ENCODE measurements at regions of chr1 and their contacts with region 1.

Region 1: GRCh38 chr1:17045634-17046333 is 8.0 kb downstream of the SDHB start:
- DNase-seq: no peak
- H3K4me3 ChIP-seq: no peak overlapping the region
- H3K27ac ChIP-seq: peak overlapping the region; percentile 3; the same call in 1 of the 2 replicates
- H3K4me1 ChIP-seq: no peaks in the 10 kb centered on the region
- H3K27me3 ChIP-seq: no peaks in the 10 kb centered on the region
- CTCF ChIP-seq: peak in 2 of 3 experiments; percentile 62 to 64; a peak in 3 of 4 replicates
- EP300 ChIP-seq: no peak
- POLR2A ChIP-seq: no peak
- RAD21 ChIP-seq: peak; percentile 78 to 81

Region 2: DNA sequence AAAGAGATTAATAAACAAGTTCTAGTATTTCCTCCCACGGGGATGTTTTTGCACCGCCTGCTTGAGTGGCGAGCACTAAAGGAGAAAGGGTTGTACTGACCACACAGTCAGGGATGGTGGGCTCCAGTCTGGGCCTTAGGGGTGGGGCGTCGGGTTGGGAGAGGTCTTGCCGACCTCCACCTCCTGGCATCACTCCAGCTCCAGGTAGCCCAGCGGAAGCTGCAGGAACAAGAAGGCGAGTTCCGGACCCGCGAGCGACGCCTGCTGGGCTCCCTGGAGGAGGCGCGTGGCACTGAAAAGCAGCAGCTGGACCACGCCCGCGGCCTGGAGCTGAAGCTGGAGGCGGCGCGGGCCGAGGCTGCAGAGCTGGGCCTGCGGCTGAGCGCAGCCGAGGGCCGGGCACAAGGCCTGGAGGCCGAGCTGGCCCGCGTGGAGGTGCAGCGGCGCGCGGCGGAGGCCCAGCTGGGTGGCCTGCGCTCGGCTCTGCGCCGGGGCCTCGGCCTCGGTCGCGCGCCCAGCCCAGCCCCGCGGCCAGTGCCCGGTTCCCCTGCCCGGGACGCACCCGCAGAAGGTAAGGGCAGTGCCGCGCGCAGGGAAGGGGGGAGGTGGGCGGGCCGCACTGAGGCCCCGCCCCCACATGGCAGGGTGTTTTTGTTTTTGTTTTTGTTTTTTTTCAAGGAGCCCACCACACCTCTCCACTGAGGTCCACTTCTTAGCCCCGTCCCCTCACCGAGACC is 85.1 kb before region 1 on chr1:
- CTCF ChIA-PET with region 1: interaction called, 95 read pairs
- POLR2A ChIA-PET with region 1: no interaction called
- DNase-seq: peak; percentile 84 to 97
- H3K4me3 ChIP-seq: peak overlapping the region; percentile 5 to 46 (median 23); a peak in 7 of 8 replicates
- H3K27ac ChIP-seq: no peak overlapping the region
- H3K4me1 ChIP-seq: no peaks in the 10 kb centered on the region
- H3K27me3 ChIP-seq: no peaks in the 10 kb centered on the region
- CTCF ChIP-seq: peak; percentile 80 to 87 (median 84)
- EP300 ChIP-seq: 0 out of 3 replicates have a peak, but pooled peaks of 1 of the 2 experiments have one; percentile 25
- POLR2A ChIP-seq: peak in 1 of 2 experiments; percentile 66; a peak in 2 of 3 replicates
- RAD21 ChIP-seq: peak; percentile 47 to 53

Region 3: GRCh38 chr1:16984717-16985116 is 61.1 kb before region 1 on chr1:
- CTCF ChIA-PET with region 1: interaction called, 49 read pairs
- POLR2A ChIA-PET with region 1: no interaction called
- DNase-seq: peak in 1 of 2 experiments; percentile 39
- H3K4me3 ChIP-seq: no peak overlapping the region
- H3K27ac ChIP-seq: no peak overlapping the region
- H3K4me1 ChIP-seq: peaks cover 0 to 9% (median 4%) of the 10 kb centered on the region in 4 experiments; a peak in 5 of 7 replicates
- H3K27me3 ChIP-seq: peaks cover 0 to 3% (median 0%) of the 10 kb centered on the region in 4 experiments; a peak in 1 of 7 replicates
- CTCF ChIP-seq: no peak
- EP300 ChIP-seq: no peak
- POLR2A ChIP-seq: no peak
- RAD21 ChIP-seq: no peak

Region 4: DNA sequence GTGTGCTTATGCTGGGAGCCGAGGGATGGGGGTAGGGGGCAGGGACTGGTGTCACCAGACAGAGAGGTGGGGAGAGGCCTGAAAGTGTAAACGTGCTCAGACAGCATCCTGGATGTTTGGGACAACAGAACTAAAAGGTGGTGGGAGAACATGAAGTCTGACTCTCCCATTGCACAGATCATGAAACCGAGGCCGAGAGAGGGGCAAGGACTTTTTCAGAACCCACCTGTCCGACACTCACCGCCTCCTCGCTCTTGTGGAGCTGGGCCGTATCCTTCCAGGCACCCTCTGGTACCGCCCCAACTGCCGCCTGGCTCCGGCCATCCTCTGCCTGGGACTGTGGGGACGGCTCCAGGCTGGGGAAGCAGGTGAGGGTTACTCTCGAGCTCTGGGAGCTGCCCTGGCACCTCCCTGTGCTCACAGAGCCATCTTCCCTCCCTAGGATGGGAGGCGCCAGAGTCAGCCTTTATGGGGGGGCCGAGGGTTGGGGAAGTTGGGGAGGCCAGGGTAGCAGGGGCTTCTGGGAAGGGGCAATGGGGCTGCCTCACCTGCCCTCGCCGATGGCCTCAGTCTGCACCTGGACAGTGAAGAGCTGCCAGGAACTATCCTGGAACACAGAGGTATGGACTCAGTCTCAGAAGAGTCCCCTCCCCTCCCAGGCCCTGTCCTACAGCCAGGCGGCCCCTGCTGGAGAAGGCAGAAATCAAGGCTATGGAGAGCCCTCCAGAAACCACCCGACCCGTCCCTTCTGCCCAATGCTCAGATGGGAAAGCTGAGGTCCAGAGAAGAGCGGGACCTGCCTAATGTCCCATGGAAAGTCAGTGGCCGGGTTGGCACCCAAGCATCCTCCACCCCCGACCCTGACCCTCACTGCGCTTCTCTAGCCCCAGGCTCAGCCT is 41.1 kb before region 1 on chr1:
- CTCF ChIA-PET with region 1: interaction called, 18 read pairs
- POLR2A ChIA-PET with region 1: interaction called, 4 read pairs
- DNase-seq: no peak
- H3K4me3 ChIP-seq: no peak overlapping the region
- H3K27ac ChIP-seq: no peak overlapping the region
- H3K4me1 ChIP-seq: peaks cover 0 to 10% (median 7%) of the 10 kb centered on the region in 4 experiments; a peak in 5 of 7 replicates
- H3K27me3 ChIP-seq: no peaks in the 10 kb centered on the region
- CTCF ChIP-seq: peak; percentile 39 to 45 (median 41)
- EP300 ChIP-seq: no peak
- POLR2A ChIP-seq: no peak
- RAD21 ChIP-seq: peak; percentile 16 to 35; a peak in 2 of 4 replicates

Region 5: GRCh38 chr1:17023102-17023501 is 22.7 kb before region 1 on chr1:
- CTCF ChIA-PET with region 1: interaction called, 16 read pairs
- POLR2A ChIA-PET with region 1: interaction called, 3 read pairs
- DNase-seq: no peak
- H3K4me3 ChIP-seq: no peak overlapping the region
- H3K27ac ChIP-seq: no peak overlapping the region
- H3K4me1 ChIP-seq: no peaks in the 10 kb centered on the region
- H3K27me3 ChIP-seq: no peaks in the 10 kb centered on the region
- CTCF ChIP-seq: no peak
- EP300 ChIP-seq: no peak
- POLR2A ChIP-seq: no peak
- RAD21 ChIP-seq: no peak

Region 6: GRCh38 chr1:17032741-17033140 is 13.0 kb before region 1 on chr1:
- CTCF ChIA-PET with region 1: interaction called, 15 read pairs
- POLR2A ChIA-PET with region 1: no interaction called
- DNase-seq: no peak
- H3K4me3 ChIP-seq: no peak overlapping the region
- H3K27ac ChIP-seq: no peak overlapping the region
- H3K4me1 ChIP-seq: no peaks in the 10 kb centered on the region
- H3K27me3 ChIP-seq: no peaks in the 10 kb centered on the region
- CTCF ChIP-seq: no peak
- EP300 ChIP-seq: no peak
- POLR2A ChIP-seq: no peak
- RAD21 ChIP-seq: no peak